Activated naive CD4-positive, alpha-beta T cell treated with anti-CD3 and anti-CD28 coated beads for 36 hours (primary cell): ENCODE measurements at regions of chr5 and their contacts with region 1.

Region 1: DNA sequence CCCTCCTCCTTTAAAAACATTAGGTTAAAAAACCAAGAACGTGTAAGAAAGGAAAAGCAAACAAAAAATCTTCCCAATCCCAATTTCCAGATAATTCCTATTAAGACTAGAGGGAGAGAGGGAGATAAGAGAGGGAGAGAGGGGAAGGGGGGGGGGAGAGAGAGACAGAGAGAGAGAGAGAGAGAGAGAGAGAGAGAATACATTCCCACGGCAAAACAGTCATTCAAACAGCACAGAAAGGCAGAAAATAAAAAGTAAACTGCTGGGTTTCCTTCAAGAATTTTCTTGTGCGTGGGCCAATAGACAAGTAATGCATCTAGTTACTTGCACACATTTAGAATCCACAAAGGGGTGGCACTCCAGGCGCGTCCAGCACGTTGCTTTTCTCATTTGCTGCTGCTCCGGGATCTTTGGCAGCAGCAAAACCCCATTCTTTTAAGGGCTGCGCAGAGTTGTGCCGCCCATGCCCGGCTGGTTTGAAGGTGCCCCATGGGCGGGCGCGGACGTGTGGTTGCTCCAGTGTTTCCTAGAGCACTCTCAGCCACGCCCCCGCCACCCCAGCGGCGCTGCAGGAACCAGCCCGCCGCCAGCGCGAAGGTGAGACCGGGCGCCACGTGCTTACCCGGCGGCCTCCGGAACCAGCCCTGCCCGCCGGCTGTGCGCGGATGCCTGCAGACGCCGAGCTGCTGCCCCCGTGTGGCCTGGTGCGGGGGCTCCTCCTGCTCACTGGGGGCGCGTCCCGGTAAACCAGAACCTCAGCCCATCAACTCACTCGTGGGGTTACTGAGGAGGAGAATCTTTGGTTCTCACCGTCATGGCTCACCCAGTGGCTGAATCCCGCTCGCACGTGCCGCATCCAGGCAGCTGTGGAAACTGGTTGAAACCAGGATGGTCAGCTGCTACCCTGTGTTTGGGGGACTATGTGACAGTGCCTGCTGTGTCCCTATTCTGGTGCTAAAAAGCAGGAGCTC is 44.6 kb downstream of the STC2 start:
- DNase-seq: peak; percentile 83
- H3K4me3 Mint-ChIP-seq: peak overlapping the region; percentile 35
- H3K27ac Mint-ChIP-seq: no peak overlapping the region
- H3K4me1 Mint-ChIP-seq: peaks cover 6% of the 10 kb centered on the region
- H3K27me3 Mint-ChIP-seq: peaks cover 57% of the 10 kb centered on the region

Region 2: GRCh38 chr5:172569861-172570558 is 713.6 kb before region 1 on chr5:
- CTCF ChIA-PET with region 1: no interaction called
- intact Hi-C with region 1: no loop called
- DNase-seq: no peak
- H3K4me3 Mint-ChIP-seq: no peak overlapping the region
- H3K27ac Mint-ChIP-seq: no peak overlapping the region
- H3K4me1 Mint-ChIP-seq: no peaks in the 10 kb centered on the region
- H3K27me3 Mint-ChIP-seq: peaks cover 3% of the 10 kb centered on the region

Region 3: GRCh38 chr5:172958331-172959046 is 325.1 kb before region 1 on chr5:
- CTCF ChIA-PET with region 1: no interaction called
- intact Hi-C with region 1: loop called (anchors 5 kb)
- DNase-seq: peak; percentile 60
- H3K4me3 Mint-ChIP-seq: peak overlapping the region; percentile 93
- H3K27ac Mint-ChIP-seq: peak overlapping the region; percentile 86
- H3K4me1 Mint-ChIP-seq: peaks cover 16% of the 10 kb centered on the region
- H3K27me3 Mint-ChIP-seq: no peaks in the 10 kb centered on the region

Region 4: DNA sequence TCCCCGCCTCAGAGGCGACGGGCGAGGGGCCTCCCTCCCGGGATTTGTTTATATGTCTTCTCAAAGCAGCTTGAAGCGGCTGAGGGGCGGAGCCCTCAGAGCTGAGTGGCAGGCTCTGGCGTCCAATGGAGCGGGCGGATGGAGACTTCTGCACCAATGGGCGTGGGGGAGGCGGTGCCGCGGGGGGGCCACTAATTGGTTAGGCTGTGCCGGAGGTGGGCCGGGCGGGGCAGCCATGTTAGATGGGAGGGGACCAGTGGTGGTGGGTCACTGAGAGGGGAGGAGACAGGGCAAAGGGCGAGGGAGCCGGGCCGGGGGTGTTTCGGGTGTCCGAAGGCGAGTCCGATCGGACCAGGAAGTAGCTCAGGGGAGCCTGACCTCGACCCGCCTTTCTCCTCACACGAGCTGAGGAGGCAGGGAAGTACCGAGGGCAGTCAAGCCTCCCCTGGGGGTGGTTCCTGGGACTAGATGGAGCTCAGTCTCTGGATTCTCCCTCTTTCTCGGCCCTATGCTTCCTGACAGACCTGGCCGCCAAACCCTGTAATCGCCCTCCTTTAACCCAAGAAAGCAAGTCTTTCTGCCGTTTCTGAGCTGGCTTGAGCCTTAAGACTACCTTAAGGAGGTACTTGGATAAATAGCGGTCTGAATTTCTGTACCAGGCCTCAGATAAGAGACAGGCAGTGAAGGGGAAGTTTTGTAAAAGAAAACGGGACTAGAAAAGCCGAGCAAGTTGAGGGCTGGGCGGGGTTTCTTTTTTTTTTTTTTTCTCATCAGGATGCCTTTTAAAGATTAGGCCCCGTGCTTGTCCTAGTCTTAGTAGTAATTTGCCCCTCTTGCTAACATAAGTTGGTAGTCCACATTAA is 226.3 kb before region 1 on chr5:
- CTCF ChIA-PET with region 1: no interaction called
- intact Hi-C with region 1: no loop called
- DNase-seq: peak; percentile 100
- H3K4me3 Mint-ChIP-seq: peak overlapping the region; percentile 91
- H3K27ac Mint-ChIP-seq: peak overlapping the region; percentile 97
- H3K4me1 Mint-ChIP-seq: peaks cover 51% of the 10 kb centered on the region
- H3K27me3 Mint-ChIP-seq: no peaks in the 10 kb centered on the region

Region 5: DNA sequence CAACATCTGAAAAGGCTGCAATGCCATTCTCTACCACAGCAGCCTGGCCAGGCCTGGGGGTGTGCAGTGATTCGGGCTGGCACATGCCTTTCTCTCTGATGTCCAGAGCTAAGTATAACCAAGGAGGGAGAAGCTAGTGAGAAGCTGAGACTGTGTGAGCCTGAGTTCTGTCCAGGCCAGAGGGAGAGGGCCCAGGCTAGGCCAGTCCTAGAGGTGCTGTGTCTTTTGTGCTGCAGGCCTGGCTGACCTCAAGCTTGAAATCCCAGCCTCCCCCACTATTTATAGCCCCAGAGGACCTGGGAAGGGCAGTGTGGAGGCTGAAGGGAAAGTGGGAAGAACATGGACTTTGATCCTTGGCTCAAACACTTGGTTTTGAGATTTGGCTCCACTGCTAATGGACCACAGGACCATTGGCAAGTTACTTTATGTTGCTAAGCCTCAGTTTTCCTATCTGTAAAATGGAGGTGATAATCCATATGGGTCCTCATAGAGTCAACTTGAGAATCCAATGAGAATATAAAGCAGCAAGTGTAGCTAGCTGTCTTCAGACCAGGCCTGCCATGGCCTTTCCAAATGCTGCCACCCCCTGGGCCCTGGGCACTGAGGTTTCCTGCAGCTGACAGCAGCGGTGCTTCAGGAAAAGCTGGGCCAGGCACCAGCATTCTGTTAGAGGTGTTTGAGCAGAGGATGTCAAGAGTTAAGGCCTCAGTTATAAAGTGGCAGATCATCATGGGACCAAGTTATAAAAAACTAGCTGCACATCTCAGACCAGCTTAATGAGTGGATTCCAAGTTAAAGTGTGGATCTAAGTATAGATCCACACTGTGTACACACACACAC is 118.2 kb before region 1 on chr5:
- CTCF ChIA-PET with region 1: no interaction called
- intact Hi-C with region 1: loop called (anchors 1 kb)
- DNase-seq: no peak
- H3K4me3 Mint-ChIP-seq: no peak overlapping the region
- H3K27ac Mint-ChIP-seq: no peak overlapping the region
- H3K4me1 Mint-ChIP-seq: no peaks in the 10 kb centered on the region
- H3K27me3 Mint-ChIP-seq: no peaks in the 10 kb centered on the region

Region 6: GRCh38 chr5:173232499-173233346 is 50.9 kb before region 1 on chr5:
- CTCF ChIA-PET with region 1: no interaction called
- intact Hi-C with region 1: loop called (anchors 2 kb)
- DNase-seq: no peak
- H3K4me3 Mint-ChIP-seq: peak overlapping the region; percentile 47
- H3K27ac Mint-ChIP-seq: no peak overlapping the region
- H3K4me1 Mint-ChIP-seq: peaks cover 56% of the 10 kb centered on the region
- H3K27me3 Mint-ChIP-seq: peaks cover 87% of the 10 kb centered on the region

Region 7: DNA sequence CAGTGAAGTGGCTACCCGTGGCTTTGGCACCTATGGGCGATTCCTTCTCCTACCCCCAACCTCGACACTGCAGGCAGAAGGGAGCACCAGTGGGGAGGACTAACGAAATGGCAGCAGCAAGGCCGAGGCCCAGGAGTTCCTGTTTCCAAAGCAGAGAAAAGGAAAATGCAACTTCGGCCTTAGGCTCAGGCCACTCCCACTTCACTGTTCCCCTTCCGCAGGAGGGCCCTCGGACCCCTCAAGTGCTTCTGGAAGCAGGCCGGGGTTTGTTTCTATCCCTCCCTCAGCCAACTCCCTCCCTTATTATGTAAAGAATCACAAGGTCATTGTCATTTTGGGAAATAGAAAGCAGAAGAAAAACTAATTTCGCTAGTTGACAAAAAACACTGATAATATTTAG is 12.2 kb before region 1 on chr5:
- CTCF ChIA-PET with region 1: no interaction called
- intact Hi-C with region 1: no loop called
- DNase-seq: no peak
- H3K4me3 Mint-ChIP-seq: no peak overlapping the region
- H3K27ac Mint-ChIP-seq: no peak overlapping the region
- H3K4me1 Mint-ChIP-seq: no peaks in the 10 kb centered on the region
- H3K27me3 Mint-ChIP-seq: peaks cover 12% of the 10 kb centered on the region